ENCODE measurements at regions of chr7 and their contacts with region 1.

Region 1: GRCh38 chr7:116862234-116862950 is at the start of gene CAPZA2:
- DNase-seq: peak; percentile 93
- H3K4me3 Mint-ChIP-seq: peak within 1 kb of the TSS; percentile 93
- H3K27ac Mint-ChIP-seq: peak within 1 kb of the TSS; percentile 97
- H3K4me1 Mint-ChIP-seq: peaks cover 33% of the 10 kb centered on the region
- H3K27me3 Mint-ChIP-seq: peaks cover 19% of the 10 kb centered on the region
- total RNA-seq, gene CAPZA2: 143 and 165 TPM in 2 replicates

Region 2: GRCh38 chr7:116588641-116589594 is 273.5 kb before region 1 on chr7:
- intact Hi-C with region 1: loop called (anchors 1 kb)
- DNase-seq: no peak
- H3K4me3 Mint-ChIP-seq: no peak overlapping the region
- H3K27ac Mint-ChIP-seq: peak overlapping the region; percentile 50
- H3K4me1 Mint-ChIP-seq: peaks cover 17% of the 10 kb centered on the region
- H3K27me3 Mint-ChIP-seq: peaks cover 21% of the 10 kb centered on the region

Region 3: GRCh38 chr7:116802746-116803152 is 59.6 kb before region 1 on chr7:
- intact Hi-C with region 1: loop called (anchors 2 kb)
- DNase-seq: peak; percentile 32
- H3K4me3 Mint-ChIP-seq: no peak overlapping the region
- H3K27ac Mint-ChIP-seq: peak overlapping the region; percentile 64
- H3K4me1 Mint-ChIP-seq: peaks cover 16% of the 10 kb centered on the region
- H3K27me3 Mint-ChIP-seq: peaks cover 10% of the 10 kb centered on the region

Region 4: DNA sequence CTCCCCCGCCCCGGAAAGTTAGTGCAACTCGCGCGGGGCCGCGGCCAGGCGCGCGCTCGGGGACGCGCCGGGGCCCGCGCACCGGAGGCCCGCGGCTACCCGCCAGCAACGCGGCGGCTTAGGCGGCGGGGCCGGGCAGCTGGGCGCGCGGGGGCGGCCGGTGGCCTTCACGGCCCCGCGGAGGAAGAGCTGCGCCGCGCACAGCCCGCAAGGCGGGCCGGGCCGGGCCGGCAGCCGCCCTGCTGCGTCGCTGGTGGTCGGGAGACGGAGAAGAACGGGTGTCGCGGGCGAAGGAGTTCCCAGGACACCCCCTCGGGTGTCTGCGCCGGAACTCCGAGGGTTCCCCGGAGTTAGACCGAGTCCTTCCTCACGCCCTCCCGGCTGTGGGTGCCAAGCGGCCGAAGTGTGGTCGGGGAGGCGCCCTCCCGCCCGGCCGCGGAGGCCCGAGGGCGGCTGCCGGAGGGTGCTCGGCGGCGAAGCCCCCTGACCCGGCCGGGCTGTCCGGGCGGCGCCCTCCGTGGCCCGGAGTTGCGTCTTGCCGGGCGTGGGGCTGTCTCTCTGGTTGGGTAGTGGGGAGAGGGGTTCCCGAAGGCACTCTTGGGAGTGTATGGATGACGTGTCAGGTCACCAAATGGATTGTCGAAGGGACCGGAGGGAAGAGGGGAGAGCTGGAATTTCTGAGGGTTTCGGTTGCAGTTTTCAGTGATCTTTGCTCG is 91.5 kb after region 1 on chr7:
- intact Hi-C with region 1: loop called (anchors 1 kb)
- DNase-seq: no peak
- H3K4me3 Mint-ChIP-seq: peak overlapping the region; percentile 93
- H3K27ac Mint-ChIP-seq: peak overlapping the region; percentile 87
- H3K4me1 Mint-ChIP-seq: peaks cover 12% of the 10 kb centered on the region
- H3K27me3 Mint-ChIP-seq: peaks cover 12% of the 10 kb centered on the region

Region 5: GRCh38 chr7:117127585-117128168 is 265.3 kb after region 1 on chr7:
- intact Hi-C with region 1: loop called (anchors 5 kb)
- DNase-seq: no peak
- H3K4me3 Mint-ChIP-seq: no peak overlapping the region
- H3K27ac Mint-ChIP-seq: no peak overlapping the region
- H3K4me1 Mint-ChIP-seq: no peaks in the 10 kb centered on the region
- H3K27me3 Mint-ChIP-seq: peaks cover 9% of the 10 kb centered on the region

Measured in activated T-helper 1 cell treated with anti-CD3 and anti-CD28 coated beads, Interleukin-12 subunit alpha, Interleukin-12 subunit beta, Interleukin-2, Interleukin-4 antibody, amounts not matched to agents 30 ng/mL and 10 ng/mL and 1 ng/mL, durations not matched to agents 14 hours and 24 hours and 36 hours (primary cell).